Endothelial cell of umbilical vein (primary cell): ENCODE measurements at regions of chr10 and their contacts with region 1.

Region 1: GRCh38 chr10:28551086-28551485 is 18.2 kb downstream of the WAC start:
- DNase-seq: peak; percentile 62
- H3K4me3 ChIP-seq: no peak overlapping the region
- H3K27ac ChIP-seq: peak overlapping the region; percentile 44
- H3K4me1 ChIP-seq: peaks cover 25% of the 10 kb centered on the region
- H3K27me3 ChIP-seq: no peaks in the 10 kb centered on the region
- CTCF ChIP-seq: no peak
- POLR2A ChIP-seq: no peak

Region 2: GRCh38 chr10:28523725-28524252 is 27.3 kb before region 1 on chr10:
- CTCF ChIA-PET with region 1: no interaction called
- POLR2A ChIA-PET with region 1: no interaction called
- dilution Hi-C with region 1: no loop called
- intact Hi-C with region 1: no loop called
- DNase-seq: no peak
- H3K4me3 ChIP-seq: no peak overlapping the region
- H3K27ac ChIP-seq: no peak overlapping the region
- H3K4me1 ChIP-seq: no peaks in the 10 kb centered on the region
- H3K27me3 ChIP-seq: no peaks in the 10 kb centered on the region
- CTCF ChIP-seq: no peak
- POLR2A ChIP-seq: no peak

Region 3: DNA sequence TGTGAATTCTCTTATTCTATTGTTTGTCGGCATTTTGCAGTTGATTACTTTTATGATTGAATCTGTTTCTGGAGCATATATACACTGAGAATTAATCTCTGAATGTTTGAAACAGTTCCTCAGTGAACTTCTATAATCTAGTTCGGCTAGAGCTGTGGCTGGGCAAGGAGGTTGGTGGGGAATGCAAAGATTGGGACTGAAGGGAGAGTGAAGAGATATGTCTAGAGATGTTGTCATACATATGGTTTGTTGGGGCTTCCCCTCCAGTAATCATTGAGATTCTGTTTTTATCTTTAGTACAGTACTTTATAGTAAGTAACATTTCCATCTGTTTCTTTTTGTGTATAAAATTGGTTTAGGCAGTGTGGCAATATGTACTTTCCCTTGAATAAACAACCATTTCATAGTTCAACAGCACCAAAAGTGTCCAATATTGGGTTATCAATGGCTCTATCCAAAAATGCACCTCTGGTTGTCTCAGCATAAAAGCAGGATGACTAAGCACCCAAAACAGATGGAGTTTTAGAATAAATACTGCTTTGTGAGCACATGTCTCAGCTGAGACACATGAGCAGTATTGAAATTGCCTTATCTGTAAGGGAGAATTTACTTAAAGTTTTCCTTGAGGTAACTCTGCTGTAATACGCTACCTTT is 18.5 kb after region 1 on chr10:
- CTCF ChIA-PET with region 1: interaction called, 4 read pairs
- POLR2A ChIA-PET with region 1: no interaction called
- dilution Hi-C with region 1: no loop called
- intact Hi-C with region 1: loop called (anchors 2 kb)
- DNase-seq: no peak
- H3K4me3 ChIP-seq: no peak overlapping the region
- H3K27ac ChIP-seq: no peak overlapping the region
- H3K4me1 ChIP-seq: peaks cover 8% of the 10 kb centered on the region
- H3K27me3 ChIP-seq: no peaks in the 10 kb centered on the region
- CTCF ChIP-seq: no peak
- POLR2A ChIP-seq: no peak

Region 4: GRCh38 chr10:28644647-28645046 is 93.6 kb after region 1 on chr10:
- CTCF ChIA-PET with region 1: no interaction called
- POLR2A ChIA-PET with region 1: no interaction called
- dilution Hi-C with region 1: no loop called
- intact Hi-C with region 1: no loop called
- DNase-seq: no peak
- H3K4me3 ChIP-seq: no peak overlapping the region
- H3K27ac ChIP-seq: no peak overlapping the region
- H3K4me1 ChIP-seq: no peaks in the 10 kb centered on the region
- H3K27me3 ChIP-seq: peaks cover 0 to 2% of the 10 kb centered on the region in 2 experiments
- CTCF ChIP-seq: no peak
- POLR2A ChIP-seq: no peak